ENCODE measurements at regions of chr5 and their contacts with region 1.

Region 1: GRCh38 chr5:97094579-97095317 is 47.7 kb downstream of the LIX1 start:
- DNase-seq: peak; percentile 56
- H3K4me3 Mint-ChIP-seq: peak overlapping the region; percentile 4
- H3K27ac Mint-ChIP-seq: no peak overlapping the region
- H3K4me1 Mint-ChIP-seq: peaks cover 15% of the 10 kb centered on the region
- H3K27me3 Mint-ChIP-seq: peaks cover 14% of the 10 kb centered on the region

Region 2: DNA sequence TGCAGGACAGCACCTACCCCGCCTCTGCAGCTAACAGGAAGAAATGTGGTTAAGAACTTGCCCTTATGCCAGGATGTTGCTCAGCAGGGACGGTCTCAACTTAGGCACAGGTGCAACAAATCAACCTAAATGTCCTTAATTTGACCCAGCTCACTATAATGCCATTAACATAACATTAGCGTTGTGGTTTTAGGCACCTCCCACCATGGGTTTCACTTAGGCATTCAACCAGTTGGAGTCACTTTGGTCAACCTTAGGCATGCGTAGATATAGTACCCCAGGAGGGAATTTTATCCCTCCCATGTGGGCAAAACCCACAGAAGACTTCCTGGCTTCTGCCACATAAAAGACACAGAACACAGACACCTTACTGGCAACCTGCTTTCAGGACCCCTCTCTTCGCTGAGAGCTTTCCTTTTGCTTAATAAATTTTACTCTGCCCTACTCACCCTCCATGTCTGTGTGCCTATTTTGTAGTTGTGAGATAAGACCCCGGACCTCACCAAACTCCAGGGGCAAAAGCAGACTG is 278.3 kb before region 1 on chr5:
- CTCF ChIA-PET with region 1: no interaction called
- POLR2A ChIA-PET with region 1: no interaction called
- intact Hi-C with region 1: loop called (anchors 2 kb)
- DNase-seq: peak; percentile 70
- H3K4me3 Mint-ChIP-seq: peak overlapping the region; percentile 78
- H3K27ac Mint-ChIP-seq: peak overlapping the region; percentile 93
- H3K4me1 Mint-ChIP-seq: peaks cover 64% of the 10 kb centered on the region
- H3K27me3 Mint-ChIP-seq: no peaks in the 10 kb centered on the region

Region 3: GRCh38 chr5:96957254-96958049 is 137.3 kb before region 1 on chr5:
- CTCF ChIA-PET with region 1: no interaction called
- POLR2A ChIA-PET with region 1: no interaction called
- intact Hi-C with region 1: loop called (anchors 1 kb)
- DNase-seq: peak; percentile 72
- H3K4me3 Mint-ChIP-seq: peak overlapping the region; percentile 61
- H3K27ac Mint-ChIP-seq: peak overlapping the region; percentile 74
- H3K4me1 Mint-ChIP-seq: peaks cover 79% of the 10 kb centered on the region
- H3K27me3 Mint-ChIP-seq: no peaks in the 10 kb centered on the region

Region 4: DNA sequence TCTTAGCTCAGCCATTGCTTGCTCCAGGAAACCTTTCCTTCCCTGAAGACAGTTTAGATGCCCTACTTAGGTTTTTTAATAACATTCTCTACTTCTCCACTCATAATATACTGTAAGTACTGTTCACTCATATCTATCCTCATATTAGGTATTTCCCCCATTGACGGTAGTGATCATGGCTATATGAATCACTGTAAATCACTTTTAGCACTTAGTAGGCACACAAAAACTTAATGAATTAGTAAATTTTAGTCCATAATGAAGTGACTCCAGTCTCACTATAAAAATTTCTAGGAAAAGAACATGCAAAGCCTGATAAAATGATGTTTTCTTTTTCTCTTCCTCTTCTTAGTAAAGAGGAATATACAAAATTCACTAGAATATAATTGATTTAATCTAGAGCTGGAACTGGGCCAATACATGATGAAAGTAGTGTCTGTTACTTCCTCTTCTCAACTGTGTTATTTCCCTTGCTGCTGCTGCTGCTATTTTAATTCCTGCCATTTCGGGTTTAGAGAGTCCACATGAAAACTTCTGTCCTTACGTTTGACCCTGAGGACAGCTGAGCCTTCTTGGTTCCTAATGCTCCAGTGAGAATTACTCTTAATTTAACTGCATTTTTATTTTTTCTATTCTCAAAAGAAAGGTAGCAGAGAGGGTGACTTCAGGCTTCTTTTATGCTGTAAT is 85.4 kb before region 1 on chr5:
- CTCF ChIA-PET with region 1: no interaction called
- POLR2A ChIA-PET with region 1: no interaction called
- intact Hi-C with region 1: loop called (anchors 2 kb)
- DNase-seq: no peak
- H3K4me3 Mint-ChIP-seq: no peak overlapping the region
- H3K27ac Mint-ChIP-seq: peak overlapping the region; percentile 47
- H3K4me1 Mint-ChIP-seq: peaks cover 19% of the 10 kb centered on the region
- H3K27me3 Mint-ChIP-seq: no peaks in the 10 kb centered on the region

Region 5: DNA sequence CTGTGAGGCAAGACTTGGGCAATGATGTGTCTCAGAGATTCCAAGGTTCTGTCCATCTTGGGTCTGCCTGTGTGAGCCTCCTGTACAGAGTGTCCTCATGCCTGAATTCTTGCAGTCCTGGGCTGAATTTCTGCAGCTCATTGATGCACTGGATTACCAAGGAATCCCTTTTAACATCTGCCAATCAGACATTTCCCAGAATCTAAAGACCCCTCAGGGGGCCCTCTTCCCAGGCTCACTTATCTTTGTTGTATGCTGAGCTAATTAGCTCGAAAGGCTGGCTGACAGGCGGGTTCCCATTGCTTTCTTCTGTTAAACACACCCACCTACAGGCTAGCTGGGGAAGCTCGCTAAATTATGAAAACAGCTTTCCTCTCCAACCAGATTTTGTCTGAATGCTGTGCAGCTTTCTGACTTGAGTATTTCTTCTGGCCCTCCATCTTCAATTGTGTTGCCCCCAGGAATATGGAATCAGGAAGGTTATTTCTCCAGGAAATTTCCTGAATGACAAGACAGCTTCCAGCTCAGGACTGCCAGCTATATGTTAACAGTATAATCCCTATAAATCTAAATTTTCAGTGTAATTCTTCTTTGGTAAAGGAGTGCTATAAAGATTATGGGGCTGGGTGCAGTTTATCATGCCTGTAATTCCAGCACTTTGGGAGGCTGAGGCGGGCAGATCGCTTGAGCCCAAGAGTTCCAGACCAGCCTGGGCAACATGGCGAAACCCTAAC is 47.9 kb after region 1 on chr5 and contains the start of gene LIX1:
- CTCF ChIA-PET with region 1: interaction called, 5 read pairs
- POLR2A ChIA-PET with region 1: no interaction called
- intact Hi-C with region 1: loop called (anchors 5 kb)
- DNase-seq: peak; percentile 43
- H3K4me3 Mint-ChIP-seq: no peak within 1 kb of the TSS
- H3K27ac Mint-ChIP-seq: no peak within 1 kb of the TSS
- H3K4me1 Mint-ChIP-seq: no peaks in the 10 kb centered on the region
- H3K27me3 Mint-ChIP-seq: peaks cover 4% of the 10 kb centered on the region
- total RNA-seq, gene LIX1: not detected

Region 6: GRCh38 chr5:97162045-97162444 is 67.3 kb after region 1 on chr5:
- CTCF ChIA-PET with region 1: interaction called, 8 read pairs
- POLR2A ChIA-PET with region 1: no interaction called
- intact Hi-C with region 1: loop called (anchors 1 kb)
- DNase-seq: peak; percentile 64
- H3K4me3 Mint-ChIP-seq: no peak overlapping the region
- H3K27ac Mint-ChIP-seq: no peak overlapping the region
- H3K4me1 Mint-ChIP-seq: peaks cover 17% of the 10 kb centered on the region
- H3K27me3 Mint-ChIP-seq: no peaks in the 10 kb centered on the region